ENCODE measurements at regions of chr15 and their contacts with region 1.

Region 1: DNA sequence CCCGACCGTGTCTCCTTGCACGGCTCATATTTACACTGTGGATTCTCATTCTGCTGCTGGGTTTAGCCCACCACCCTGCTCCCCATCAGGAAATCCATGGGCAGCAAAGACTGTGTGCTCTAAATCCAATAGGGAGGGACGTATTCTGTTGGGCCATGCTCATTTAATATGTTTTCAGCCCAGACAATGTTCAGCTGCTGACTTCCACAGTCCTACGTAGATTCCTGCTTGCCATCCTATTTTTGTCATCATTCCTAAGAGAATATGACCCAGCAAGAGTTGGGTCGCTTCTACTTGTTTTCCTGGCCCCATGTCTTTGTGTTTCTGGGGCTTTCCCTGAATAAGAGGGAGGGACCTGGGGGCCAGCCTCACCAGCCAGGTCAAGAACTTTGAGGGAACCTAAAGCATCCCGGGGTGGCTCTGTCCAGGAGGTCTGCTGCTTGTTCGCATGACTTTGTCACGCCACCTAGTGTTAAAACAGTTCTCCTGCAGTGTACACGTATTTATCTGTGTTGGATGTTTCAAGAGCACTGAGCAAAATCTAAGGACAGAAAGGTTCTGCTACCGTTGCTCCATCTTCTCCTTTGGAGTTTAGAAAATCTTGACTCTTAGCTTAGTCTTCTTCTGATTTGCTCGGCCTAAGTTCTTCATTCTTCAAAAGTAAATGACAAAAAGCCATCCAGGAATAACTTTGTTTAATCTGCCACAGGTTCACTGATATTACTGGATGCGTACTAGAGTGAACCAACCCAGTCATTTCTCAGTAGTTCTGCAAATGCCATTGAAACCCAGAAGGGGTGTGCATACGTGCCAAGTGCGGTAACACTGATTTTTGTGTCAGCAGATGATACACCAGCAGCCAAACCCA is 79.8 kb upstream of the NR2E3 start:
- DNase-seq: peak; percentile 72
- H3K4me3 Mint-ChIP-seq: no peak overlapping the region
- H3K27ac Mint-ChIP-seq: no peak overlapping the region
- H3K4me1 Mint-ChIP-seq: peaks cover 2% of the 10 kb centered on the region
- H3K27me3 Mint-ChIP-seq: no peaks in the 10 kb centered on the region
- CTCF ChIP-seq: peak; percentile 54

Region 2: DNA sequence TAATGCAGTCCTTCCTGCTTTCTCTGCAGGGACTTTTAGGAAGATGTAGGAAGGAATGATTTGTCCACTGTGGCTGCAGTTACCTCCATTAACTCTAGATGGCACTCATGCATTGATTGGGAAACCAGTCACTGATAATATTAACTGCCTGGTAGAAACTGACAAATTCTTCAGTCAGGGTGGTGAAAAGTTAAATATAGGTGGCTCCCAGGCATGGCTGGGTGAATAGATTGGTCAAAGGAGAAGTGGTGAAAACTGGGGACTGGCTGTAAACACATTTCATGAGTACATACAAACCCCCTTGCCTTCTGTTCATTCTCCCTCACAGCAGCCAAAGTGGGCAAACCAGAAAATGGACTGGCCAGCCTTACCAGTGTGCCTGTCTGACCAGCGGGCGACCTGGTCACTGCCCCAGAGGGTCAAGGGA is 281.8 kb before region 1 on chr15:
- CTCF ChIA-PET with region 1: interaction called, 7 read pairs
- POLR2A ChIA-PET with region 1: no interaction called
- intact Hi-C with region 1: loop called (anchors 1 kb)
- DNase-seq: peak; percentile 79
- H3K4me3 Mint-ChIP-seq: no peak overlapping the region
- H3K27ac Mint-ChIP-seq: peak overlapping the region; percentile 39
- H3K4me1 Mint-ChIP-seq: no peaks in the 10 kb centered on the region
- H3K27me3 Mint-ChIP-seq: no peaks in the 10 kb centered on the region
- CTCF ChIP-seq: peak; percentile 86

Region 3: GRCh38 chr15:71575474-71576045 is 155.0 kb before region 1 on chr15:
- CTCF ChIA-PET with region 1: interaction called, 16 read pairs
- POLR2A ChIA-PET with region 1: interaction called, 3 read pairs
- intact Hi-C with region 1: loop called (anchors 1 kb)
- DNase-seq: peak; percentile 23
- H3K4me3 Mint-ChIP-seq: no peak overlapping the region
- H3K27ac Mint-ChIP-seq: no peak overlapping the region
- H3K4me1 Mint-ChIP-seq: peaks cover 19% of the 10 kb centered on the region
- H3K27me3 Mint-ChIP-seq: no peaks in the 10 kb centered on the region
- CTCF ChIP-seq: peak; percentile 44

Region 4: GRCh38 chr15:71716990-71717389 is 13.5 kb before region 1 on chr15:
- CTCF ChIA-PET with region 1: interaction called, 16 read pairs
- POLR2A ChIA-PET with region 1: interaction called, 5 read pairs
- intact Hi-C with region 1: no loop called
- DNase-seq: peak; percentile 30
- H3K4me3 Mint-ChIP-seq: no peak overlapping the region
- H3K27ac Mint-ChIP-seq: peak overlapping the region; percentile 60
- H3K4me1 Mint-ChIP-seq: peaks cover 13% of the 10 kb centered on the region
- H3K27me3 Mint-ChIP-seq: no peaks in the 10 kb centered on the region
- CTCF ChIP-seq: no peak

Region 5: DNA sequence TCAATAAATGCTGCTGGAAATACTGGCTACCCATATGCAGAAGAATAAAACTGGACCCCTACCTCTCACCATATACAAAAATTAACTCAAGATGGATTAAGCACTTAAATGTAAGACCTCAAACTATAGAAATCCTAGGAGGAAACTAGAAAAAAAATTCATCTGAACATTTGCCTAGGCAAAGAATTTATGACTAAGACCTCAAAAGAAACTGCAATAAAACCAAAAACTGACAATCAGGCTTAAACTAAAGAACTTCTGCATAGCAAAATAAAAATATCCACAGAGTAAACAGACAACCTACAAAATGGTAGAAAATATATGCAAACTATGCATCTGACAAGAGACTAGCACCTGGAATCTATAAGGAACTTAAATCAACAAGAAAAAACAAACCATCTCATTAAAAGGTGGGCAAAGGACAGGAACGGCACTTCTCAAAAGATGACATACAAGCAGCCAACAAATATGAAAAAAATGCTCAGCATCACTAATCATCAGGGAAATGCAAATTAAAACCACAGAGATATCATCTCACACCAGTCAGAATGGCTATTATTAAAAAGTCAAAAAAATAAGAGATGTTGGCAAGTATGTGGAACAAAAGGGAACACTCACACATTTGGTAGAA is 340.4 kb after region 1 on chr15:
- CTCF ChIA-PET with region 1: no interaction called
- POLR2A ChIA-PET with region 1: no interaction called
- intact Hi-C with region 1: no loop called
- DNase-seq: no peak
- H3K4me3 Mint-ChIP-seq: no peak overlapping the region
- H3K27ac Mint-ChIP-seq: no peak overlapping the region
- H3K4me1 Mint-ChIP-seq: no peaks in the 10 kb centered on the region
- H3K27me3 Mint-ChIP-seq: no peaks in the 10 kb centered on the region
- CTCF ChIP-seq: no peak